ENCODE measurements at regions of chr2 and their contacts with region 1.

Region 1: GRCh38 chr2:218806346-218806978 is 24.5 kb downstream of the CYP27A1 start:
- DNase-seq: peak; percentile 89 to 90
- ATAC-seq: peak; percentile 97
- H3K4me3 ChIP-seq: no peak overlapping the region
- H3K27ac ChIP-seq: peak overlapping the region; percentile 51 to 76
- H3K4me1 ChIP-seq: peaks cover 2 to 6% of the 10 kb centered on the region in 2 donors
- H3K27me3 ChIP-seq: no peaks in the 10 kb centered on the region

Region 2: GRCh38 chr2:218710687-218711549 is 95.5 kb before region 1 on chr2 and contains the start of gene TTLL4:
- intact Hi-C with region 1: loop called in 1 of 2 experiments (anchors 5 kb)
- DNase-seq: peak; percentile 99 to 100
- ATAC-seq: peak; percentile 100
- H3K4me3 ChIP-seq: peak within 1 kb of the TSS; percentile 13 to 45
- H3K27ac ChIP-seq: peak within 1 kb of the TSS in 1 of 2 donors; percentile 14
- H3K4me1 ChIP-seq: no peaks in the 10 kb centered on the region
- H3K27me3 ChIP-seq: no peaks in the 10 kb centered on the region
- total RNA-seq, gene TTLL4: 22.3 to 36.3 TPM

Measured in aorta (tissue), 5 donors.